ENCODE measurements at regions of chr12 and their contacts with region 1.

Region 1: GRCh38 chr12:99043319-99043914 is 398.3 kb downstream of the APAF1 start:
- DNase-seq: peak; percentile 63
- H3K4me3 Mint-ChIP-seq: no peak overlapping the region
- H3K27ac Mint-ChIP-seq: no peak overlapping the region
- H3K4me1 Mint-ChIP-seq: no peaks in the 10 kb centered on the region
- H3K27me3 Mint-ChIP-seq: peaks cover 9% of the 10 kb centered on the region

Region 2: DNA sequence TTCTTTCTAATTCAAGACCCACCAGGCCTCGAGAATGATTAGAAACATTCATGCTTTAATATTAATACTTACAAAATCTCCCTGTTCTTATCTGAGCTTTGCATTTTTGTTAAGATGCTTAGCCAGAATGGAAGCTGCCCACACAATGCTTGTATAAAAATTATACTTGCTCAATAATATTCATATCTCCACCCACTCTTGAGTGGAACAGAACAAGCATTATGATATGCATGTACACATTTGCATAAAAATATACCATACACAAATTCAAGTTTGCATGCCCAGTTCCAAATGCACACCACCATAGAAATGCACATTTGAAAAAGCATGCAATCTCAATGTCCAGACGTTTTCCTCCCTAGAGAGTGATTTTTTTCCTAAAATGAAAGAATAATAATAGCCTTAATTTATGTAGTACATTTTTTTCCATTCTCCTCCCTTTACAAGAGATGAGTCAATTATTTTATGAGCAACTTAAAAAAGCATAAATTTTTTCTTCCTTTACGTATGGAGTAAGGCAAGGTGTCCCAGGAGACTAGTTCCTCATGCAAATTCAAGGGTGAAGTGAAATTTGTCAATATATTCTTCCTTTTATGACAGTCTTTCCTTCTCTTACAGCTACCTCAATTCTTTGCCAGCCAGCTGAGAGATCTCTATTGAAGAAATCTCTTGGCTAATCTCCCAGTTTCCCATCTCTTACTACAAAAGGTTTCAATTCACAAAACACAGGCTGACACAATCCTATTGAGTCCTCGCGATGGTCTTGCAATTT is 291.1 kb after region 1 on chr12:
- CTCF ChIA-PET with region 1: no interaction called
- intact Hi-C with region 1: no loop called
- DNase-seq: no peak
- H3K4me3 Mint-ChIP-seq: no peak overlapping the region
- H3K27ac Mint-ChIP-seq: no peak overlapping the region
- H3K4me1 Mint-ChIP-seq: no peaks in the 10 kb centered on the region
- H3K27me3 Mint-ChIP-seq: no peaks in the 10 kb centered on the region

Region 3: DNA sequence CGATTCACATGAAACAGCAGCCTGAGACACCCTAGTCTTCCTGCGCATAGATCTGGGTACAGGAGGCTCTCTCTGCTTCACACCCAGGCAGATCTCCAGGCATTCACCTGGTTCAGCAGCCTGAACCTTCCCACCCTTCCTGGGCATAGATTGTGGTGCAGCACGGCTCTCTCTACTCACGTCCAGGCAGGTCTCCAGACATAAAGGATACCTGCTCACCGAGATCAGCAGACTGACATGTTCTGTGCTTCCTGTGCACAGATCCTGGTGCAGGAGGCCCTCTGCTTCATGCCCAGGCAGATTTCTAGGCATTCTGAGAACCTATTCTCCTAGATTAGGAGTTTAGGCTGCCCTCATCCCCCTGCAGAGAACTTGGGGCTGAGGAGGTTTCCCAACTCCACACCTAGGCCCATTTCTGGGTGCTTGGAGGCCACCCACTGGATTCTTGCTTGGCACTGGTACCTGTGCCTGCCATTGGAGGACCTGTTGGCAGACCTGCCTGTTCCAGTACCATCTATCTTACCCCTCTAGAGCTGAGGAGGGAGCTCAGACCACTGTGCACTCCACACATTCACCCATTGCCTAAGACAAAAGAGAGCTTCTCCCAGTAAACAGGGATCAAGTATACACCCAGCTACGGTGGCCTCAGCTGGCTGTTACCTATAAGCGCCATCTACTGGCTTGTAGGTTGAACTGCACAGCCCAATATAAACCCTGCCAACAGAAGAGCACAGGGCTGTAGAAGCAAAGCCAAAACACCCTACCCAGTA is 576.2 kb after region 1 on chr12:
- CTCF ChIA-PET with region 1: interaction called, 8 read pairs
- intact Hi-C with region 1: loop called (anchors 1 kb)
- DNase-seq: no peak
- H3K4me3 Mint-ChIP-seq: no peak overlapping the region
- H3K27ac Mint-ChIP-seq: no peak overlapping the region
- H3K4me1 Mint-ChIP-seq: no peaks in the 10 kb centered on the region
- H3K27me3 Mint-ChIP-seq: no peaks in the 10 kb centered on the region

Region 4: DNA sequence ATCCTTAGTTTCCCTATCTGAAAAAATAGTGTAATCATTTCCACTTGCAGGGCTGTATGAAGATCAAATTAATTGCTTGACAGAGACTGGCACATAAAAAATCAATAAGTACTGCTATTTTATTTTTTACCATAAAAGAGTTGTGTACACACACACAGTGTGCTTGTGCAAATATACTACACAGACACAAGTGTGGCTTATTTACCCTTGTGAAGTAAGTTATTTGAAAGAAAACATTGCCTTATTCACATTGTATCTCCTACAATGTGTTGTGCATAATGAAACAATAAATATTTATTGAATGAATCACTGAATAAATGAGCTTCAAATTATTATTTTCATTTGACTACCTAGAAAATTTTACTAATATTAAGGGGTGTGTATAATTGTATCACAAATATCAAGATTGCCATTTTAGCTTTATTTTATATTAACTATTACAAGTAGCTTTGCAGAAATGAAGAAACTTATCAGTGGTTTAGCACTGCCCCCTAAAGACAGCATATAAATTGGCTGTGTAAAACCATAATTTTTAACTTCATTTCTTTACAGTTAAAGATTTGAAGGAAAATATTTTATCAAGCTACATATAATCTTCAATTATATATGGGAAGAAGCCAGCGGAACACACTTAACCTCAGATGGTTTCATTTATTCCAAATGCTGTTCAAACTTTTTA is 615.4 kb after region 1 on chr12:
- CTCF ChIA-PET with region 1: no interaction called
- intact Hi-C with region 1: loop called (anchors 1 kb)
- DNase-seq: no peak
- H3K4me3 Mint-ChIP-seq: no peak overlapping the region
- H3K27ac Mint-ChIP-seq: no peak overlapping the region
- H3K4me1 Mint-ChIP-seq: no peaks in the 10 kb centered on the region
- H3K27me3 Mint-ChIP-seq: no peaks in the 10 kb centered on the region

Region 5: GRCh38 chr12:99767809-99768208 is 724.4 kb after region 1 on chr12:
- CTCF ChIA-PET with region 1: interaction called, 4 read pairs
- intact Hi-C with region 1: loop called (anchors 1 kb)
- DNase-seq: no peak
- H3K4me3 Mint-ChIP-seq: no peak overlapping the region
- H3K27ac Mint-ChIP-seq: no peak overlapping the region
- H3K4me1 Mint-ChIP-seq: no peaks in the 10 kb centered on the region
- H3K27me3 Mint-ChIP-seq: no peaks in the 10 kb centered on the region